ENCODE measurements at regions of chr19 and their contacts with region 1.

Region 1: DNA sequence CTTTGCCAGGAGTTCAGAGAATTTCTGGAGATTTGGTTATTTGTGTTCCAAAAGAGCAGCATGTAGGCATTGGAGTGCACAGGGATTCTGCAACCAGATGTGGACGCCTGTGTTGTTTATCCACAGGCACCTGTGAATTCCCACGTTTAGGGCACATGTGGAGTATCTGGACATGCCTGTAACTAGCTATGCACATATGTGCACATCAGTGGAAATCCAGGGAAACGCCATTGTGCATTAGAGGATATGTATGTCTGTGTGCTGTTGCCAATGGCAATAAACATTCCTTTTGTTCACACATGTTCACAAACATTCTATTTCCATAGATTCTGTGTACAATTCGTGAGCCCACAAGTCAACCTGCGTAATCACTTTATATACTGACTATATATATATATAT is 34.7 kb downstream of the OLFM2 start:
- DNase-seq: no peak
- ATAC-seq: no peak
- H3K4me3 Mint-ChIP-seq: no peak overlapping the region
- H3K27ac Mint-ChIP-seq: 0 out of 2 replicates have a peak overlapping the region, but pooled peaks have one; percentile 70
- H3K4me1 Mint-ChIP-seq: peaks cover 27% of the 10 kb centered on the region
- H3K27me3 Mint-ChIP-seq: no peaks in the 10 kb centered on the region
- CTCF ChIP-seq: no peak

Region 2: GRCh38 chr19:9885077-9885552 is 16.5 kb before region 1 on chr19:
- CTCF ChIA-PET with region 1: interaction called, 10 read pairs
- POLR2A ChIA-PET with region 1: no interaction called
- DNase-seq: no peak
- ATAC-seq: 0 out of 2 replicates have a peak, but pooled peaks have one; percentile 50
- H3K4me3 Mint-ChIP-seq: no peak overlapping the region
- H3K27ac Mint-ChIP-seq: no peak overlapping the region
- H3K4me1 Mint-ChIP-seq: peaks cover 5% of the 10 kb centered on the region
- H3K27me3 Mint-ChIP-seq: no peaks in the 10 kb centered on the region
- CTCF ChIP-seq: no peak

Region 3: DNA sequence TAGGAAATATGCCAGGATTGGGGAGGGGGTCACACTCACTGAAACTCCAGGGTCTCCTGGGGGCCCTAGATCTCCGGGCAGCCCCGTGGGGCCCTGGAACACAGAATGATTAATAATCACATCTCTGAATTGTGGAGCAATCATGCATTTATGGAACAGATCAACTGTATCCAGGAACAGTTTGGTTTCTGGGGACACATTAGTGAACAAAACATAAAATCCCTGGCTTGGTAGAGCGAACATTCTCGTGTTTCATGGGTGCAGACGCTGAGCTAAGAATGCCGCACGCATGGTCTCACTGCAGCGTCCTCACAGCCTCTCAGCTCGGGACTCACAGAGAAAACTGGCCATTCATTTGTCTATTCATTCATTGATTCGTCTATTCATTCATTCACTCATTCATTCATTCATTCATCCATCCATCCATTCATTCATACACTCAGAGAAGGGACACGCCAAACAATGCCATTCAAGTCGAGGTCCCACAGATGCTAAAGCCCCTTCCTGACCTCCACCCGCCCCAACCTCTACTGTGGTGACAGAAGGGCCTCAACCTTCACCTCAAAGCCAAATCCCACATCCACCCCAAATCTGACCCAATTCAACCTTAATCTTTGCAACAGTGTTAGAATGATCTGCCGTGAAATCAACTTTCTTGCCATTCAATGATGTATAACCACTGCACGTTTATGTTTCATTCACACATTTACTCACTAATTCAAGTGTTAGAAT is 69.7 kb after region 1 on chr19:
- CTCF ChIA-PET with region 1: no interaction called
- POLR2A ChIA-PET with region 1: no interaction called
- DNase-seq: no peak
- ATAC-seq: no peak
- H3K4me3 Mint-ChIP-seq: no peak overlapping the region
- H3K27ac Mint-ChIP-seq: no peak overlapping the region
- H3K4me1 Mint-ChIP-seq: peaks cover 7% of the 10 kb centered on the region
- H3K27me3 Mint-ChIP-seq: peaks cover 39% of the 10 kb centered on the region
- CTCF ChIP-seq: no peak

Region 4: GRCh38 chr19:10074153-10074552 is 172.5 kb after region 1 on chr19:
- CTCF ChIA-PET with region 1: no interaction called
- POLR2A ChIA-PET with region 1: no interaction called
- DNase-seq: no peak
- ATAC-seq: no peak
- H3K4me3 Mint-ChIP-seq: no peak overlapping the region
- H3K27ac Mint-ChIP-seq: no peak overlapping the region
- H3K4me1 Mint-ChIP-seq: peaks cover 8% of the 10 kb centered on the region
- H3K27me3 Mint-ChIP-seq: peaks cover 43% of the 10 kb centered on the region
- CTCF ChIP-seq: peak; percentile 17; the same call in 1 of the 2 replicates